ENCODE measurements at regions of chr12 and their contacts with region 1.

Region 1: GRCh38 chr12:54549774-54550451 is 512 bp downstream of the PDE1B start:
- DNase-seq: peak; percentile 63
- H3K4me3 Mint-ChIP-seq: peak overlapping the region; percentile 82
- H3K27ac Mint-ChIP-seq: no peak overlapping the region
- H3K4me1 Mint-ChIP-seq: peaks cover 36% of the 10 kb centered on the region
- H3K27me3 Mint-ChIP-seq: peaks cover 6% of the 10 kb centered on the region

Region 2: GRCh38 chr12:54214553-54215406 is 335.1 kb before region 1 on chr12:
- CTCF ChIA-PET with region 1: no interaction called
- intact Hi-C with region 1: no loop called
- DNase-seq: peak; percentile 95
- H3K4me3 Mint-ChIP-seq: peak overlapping the region; percentile 61
- H3K27ac Mint-ChIP-seq: no peak overlapping the region
- H3K4me1 Mint-ChIP-seq: peaks cover 21% of the 10 kb centered on the region
- H3K27me3 Mint-ChIP-seq: peaks cover 4% of the 10 kb centered on the region

Region 3: GRCh38 chr12:54560374-54560858 is 10.5 kb after region 1 on chr12:
- CTCF ChIA-PET with region 1: no interaction called
- intact Hi-C with region 1: loop called (anchors 1 kb)
- DNase-seq: peak; percentile 97
- H3K4me3 Mint-ChIP-seq: peak overlapping the region; percentile 72
- H3K27ac Mint-ChIP-seq: peak overlapping the region; percentile 80
- H3K4me1 Mint-ChIP-seq: peaks cover 31% of the 10 kb centered on the region
- H3K27me3 Mint-ChIP-seq: peaks cover 3% of the 10 kb centered on the region